CD4-positive, alpha-beta T cell (primary cell): ENCODE measurements at regions of chr1 and their contacts with region 1.

Region 1: GRCh38 chr1:228515200-228515834 is 28.1 kb downstream of the RNF187 start:
- DNase-seq: peak in 8 of 14 experiments; percentile 15 to 72 (median 36)
- ATAC-seq: peak; percentile 61
- H3K4me3 ChIP-seq: no peak overlapping the region
- H3K4me3 Mint-ChIP-seq: no peak overlapping the region
- H3K27ac ChIP-seq: no peak overlapping the region
- H3K27ac Mint-ChIP-seq: no peak overlapping the region
- H3K4me1 ChIP-seq: peaks cover 14% of the 10 kb centered on the region
- H3K4me1 Mint-ChIP-seq: peaks cover 12% of the 10 kb centered on the region
- H3K27me3 ChIP-seq: peaks cover 6 to 20% of the 10 kb centered on the region in 2 experiments
- H3K27me3 Mint-ChIP-seq: peaks cover 22% of the 10 kb centered on the region
- CTCF ChIP-seq: peak; percentile 85

Region 2: GRCh38 chr1:227486559-227486958 is 1028.8 kb before region 1 on chr1:
- CTCF ChIA-PET with region 1: no interaction called
- POLR2A ChIA-PET with region 1: no interaction called
- intact Hi-C with region 1: loop called in 1 of 2 experiments (anchors 5 kb)
- DNase-seq: peak in 1 of 14 experiments; percentile 7
- ATAC-seq: no peak
- H3K4me3 ChIP-seq: no peak overlapping the region
- H3K4me3 Mint-ChIP-seq: no peak overlapping the region
- H3K27ac ChIP-seq: no peak overlapping the region
- H3K27ac Mint-ChIP-seq: no peak overlapping the region
- H3K4me1 ChIP-seq: no peaks in the 10 kb centered on the region
- H3K4me1 Mint-ChIP-seq: no peaks in the 10 kb centered on the region
- H3K27me3 ChIP-seq: no peaks in the 10 kb centered on the region
- H3K27me3 Mint-ChIP-seq: peaks cover 3% of the 10 kb centered on the region
- CTCF ChIP-seq: no peak

Region 3: GRCh38 chr1:227999056-227999930 is 516.0 kb before region 1 on chr1:
- CTCF ChIA-PET with region 1: no interaction called
- POLR2A ChIA-PET with region 1: no interaction called
- intact Hi-C with region 1: loop called (anchors 2 kb)
- DNase-seq: peak; percentile 46 to 83 (median 63)
- ATAC-seq: peak; percentile 98
- H3K4me3 ChIP-seq: no peak overlapping the region
- H3K4me3 Mint-ChIP-seq: no peak overlapping the region
- H3K27ac ChIP-seq: no peak overlapping the region
- H3K27ac Mint-ChIP-seq: no peak overlapping the region
- H3K4me1 ChIP-seq: peaks cover 2% of the 10 kb centered on the region
- H3K4me1 Mint-ChIP-seq: no peaks in the 10 kb centered on the region
- H3K27me3 ChIP-seq: peaks cover 9 to 11% of the 10 kb centered on the region in 2 experiments
- H3K27me3 Mint-ChIP-seq: peaks cover 43% of the 10 kb centered on the region
- CTCF ChIP-seq: peak; percentile 62

Region 4: DNA sequence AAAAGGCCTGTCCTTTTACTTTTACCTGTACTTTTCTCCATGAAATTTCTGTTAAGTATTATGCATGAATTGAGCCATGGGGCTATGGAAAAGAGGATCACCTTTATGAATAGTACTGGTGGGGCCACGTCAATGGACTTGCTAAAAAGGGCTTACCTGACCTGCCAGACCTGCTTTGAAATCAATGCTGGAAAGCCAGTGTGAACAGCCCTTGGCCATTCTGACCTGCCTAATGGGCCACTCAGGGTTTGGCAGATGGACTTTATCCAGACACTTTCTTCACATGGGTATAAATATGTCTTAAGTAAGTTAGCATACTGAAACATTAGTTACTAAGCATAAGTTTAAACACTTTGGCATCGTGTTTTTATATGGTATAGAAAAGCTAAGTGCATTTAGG is 383.6 kb before region 1 on chr1:
- CTCF ChIA-PET with region 1: interaction called, 5 read pairs
- POLR2A ChIA-PET with region 1: no interaction called
- intact Hi-C with region 1: loop called (anchors 1 kb)
- DNase-seq: no peak
- ATAC-seq: no peak
- H3K4me3 ChIP-seq: no peak overlapping the region
- H3K4me3 Mint-ChIP-seq: no peak overlapping the region
- H3K27ac ChIP-seq: no peak overlapping the region
- H3K27ac Mint-ChIP-seq: no peak overlapping the region
- H3K4me1 ChIP-seq: peaks cover 4% of the 10 kb centered on the region
- H3K4me1 Mint-ChIP-seq: peaks cover 5% of the 10 kb centered on the region
- H3K27me3 ChIP-seq: peaks cover 4 to 8% of the 10 kb centered on the region in 2 experiments
- H3K27me3 Mint-ChIP-seq: peaks cover 22% of the 10 kb centered on the region
- CTCF ChIP-seq: no peak

Region 5: GRCh38 chr1:228212966-228213844 is 302.1 kb before region 1 on chr1:
- CTCF ChIA-PET with region 1: no interaction called
- POLR2A ChIA-PET with region 1: no interaction called
- intact Hi-C with region 1: loop called in 1 of 2 experiments (anchors 1 kb)
- DNase-seq: peak; percentile 83 to 96 (median 90)
- ATAC-seq: peak; percentile 89
- H3K4me3 ChIP-seq: peak overlapping the region; percentile 64
- H3K4me3 Mint-ChIP-seq: peak overlapping the region; percentile 92
- H3K27ac ChIP-seq: peak overlapping the region in 1 of 2 donors; percentile 21
- H3K27ac Mint-ChIP-seq: peak overlapping the region; percentile 86
- H3K4me1 ChIP-seq: peaks cover 22% of the 10 kb centered on the region
- H3K4me1 Mint-ChIP-seq: peaks cover 12% of the 10 kb centered on the region
- H3K27me3 ChIP-seq: no peaks in the 10 kb centered on the region
- H3K27me3 Mint-ChIP-seq: no peaks in the 10 kb centered on the region
- CTCF ChIP-seq: peak; percentile 59

Region 6: DNA sequence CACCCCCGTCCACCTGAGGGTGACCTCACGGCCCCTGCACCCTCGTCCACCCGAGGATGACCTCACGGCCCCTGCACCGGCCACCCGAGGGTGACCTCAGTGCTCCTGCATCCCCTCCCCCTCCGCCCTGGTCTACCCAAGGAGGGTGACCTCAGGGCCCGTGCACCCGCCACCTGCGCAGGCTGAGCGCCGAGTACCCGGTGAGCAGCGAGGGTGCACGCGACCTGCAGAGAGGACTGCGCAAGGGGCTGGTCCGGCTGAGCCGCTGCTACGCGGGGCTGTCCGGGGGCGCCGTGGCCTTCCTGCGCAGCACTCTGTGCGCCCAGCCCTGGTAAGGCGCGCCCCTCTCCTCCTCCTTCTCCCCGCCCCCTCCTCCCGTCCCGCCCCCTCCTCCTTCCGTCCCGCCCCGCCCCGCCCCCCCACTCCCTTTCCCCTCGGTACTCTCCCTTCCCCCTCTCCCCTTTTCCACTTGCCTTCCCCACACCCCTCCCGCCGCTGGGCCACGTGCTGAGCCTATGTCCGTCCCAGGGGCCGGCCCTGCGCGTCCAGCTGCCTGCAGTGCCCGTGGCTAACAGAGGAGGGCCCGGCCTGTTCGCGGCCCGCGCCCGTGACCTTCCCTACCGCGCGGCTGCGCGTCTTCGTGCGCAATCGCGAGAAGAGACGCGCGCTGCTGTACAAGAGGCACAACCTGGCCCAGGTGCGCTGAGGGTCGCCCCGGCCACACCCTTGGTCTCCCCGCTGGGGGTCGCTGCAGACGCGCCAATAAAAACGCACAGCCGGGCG is 137.0 kb before region 1 on chr1:
- CTCF ChIA-PET with region 1: no interaction called
- POLR2A ChIA-PET with region 1: no interaction called
- intact Hi-C with region 1: loop called (anchors 2 kb)
- DNase-seq: peak; percentile 29 to 68 (median 52)
- ATAC-seq: peak; percentile 75
- H3K4me3 ChIP-seq: peak overlapping the region; percentile 53
- H3K4me3 Mint-ChIP-seq: peak overlapping the region; percentile 88
- H3K27ac ChIP-seq: no peak overlapping the region
- H3K27ac Mint-ChIP-seq: no peak overlapping the region
- H3K4me1 ChIP-seq: peaks cover 16% of the 10 kb centered on the region
- H3K4me1 Mint-ChIP-seq: no peaks in the 10 kb centered on the region
- H3K27me3 ChIP-seq: peaks cover 0 to 4% of the 10 kb centered on the region in 2 experiments
- H3K27me3 Mint-ChIP-seq: no peaks in the 10 kb centered on the region
- CTCF ChIP-seq: peak; percentile 41

Region 7: GRCh38 chr1:228457396-228458176 is 57.7 kb before region 1 on chr1:
- CTCF ChIA-PET with region 1: no interaction called
- POLR2A ChIA-PET with region 1: no interaction called
- intact Hi-C with region 1: no loop called
- DNase-seq: peak; percentile 68 to 99 (median 76)
- ATAC-seq: peak; percentile 83
- H3K4me3 ChIP-seq: peak overlapping the region; percentile 67
- H3K4me3 Mint-ChIP-seq: peak overlapping the region; percentile 95
- H3K27ac ChIP-seq: peak overlapping the region; percentile 68 to 94
- H3K27ac Mint-ChIP-seq: peak overlapping the region; percentile 98
- H3K4me1 ChIP-seq: peaks cover 30% of the 10 kb centered on the region
- H3K4me1 Mint-ChIP-seq: peaks cover 54% of the 10 kb centered on the region
- H3K27me3 ChIP-seq: no peaks in the 10 kb centered on the region
- H3K27me3 Mint-ChIP-seq: peaks cover 5% of the 10 kb centered on the region
- CTCF ChIP-seq: no peak

Region 8: GRCh38 chr1:228500901-228501871 is 14.1 kb before region 1 on chr1:
- CTCF ChIA-PET with region 1: interaction called, 3 read pairs
- POLR2A ChIA-PET with region 1: no interaction called
- intact Hi-C with region 1: loop called in 1 of 2 experiments (anchors 1 kb)
- DNase-seq: peak; percentile 78 to 94 (median 83)
- ATAC-seq: peak; percentile 99
- H3K4me3 ChIP-seq: peak overlapping the region; percentile 28
- H3K4me3 Mint-ChIP-seq: peak overlapping the region; percentile 84
- H3K27ac ChIP-seq: no peak overlapping the region
- H3K27ac Mint-ChIP-seq: peak overlapping the region; percentile 55
- H3K4me1 ChIP-seq: peaks cover 19% of the 10 kb centered on the region
- H3K4me1 Mint-ChIP-seq: peaks cover 20% of the 10 kb centered on the region
- H3K27me3 ChIP-seq: peaks cover 0 to 3% of the 10 kb centered on the region in 2 experiments
- H3K27me3 Mint-ChIP-seq: no peaks in the 10 kb centered on the region
- CTCF ChIP-seq: peak; percentile 97